Activated CD4-positive, alpha-beta memory T cell treated with anti-CD3 and anti-CD28 coated beads for 36 hours (primary cell): ENCODE measurements at regions of chr11 and their contacts with region 1.

Region 1: DNA sequence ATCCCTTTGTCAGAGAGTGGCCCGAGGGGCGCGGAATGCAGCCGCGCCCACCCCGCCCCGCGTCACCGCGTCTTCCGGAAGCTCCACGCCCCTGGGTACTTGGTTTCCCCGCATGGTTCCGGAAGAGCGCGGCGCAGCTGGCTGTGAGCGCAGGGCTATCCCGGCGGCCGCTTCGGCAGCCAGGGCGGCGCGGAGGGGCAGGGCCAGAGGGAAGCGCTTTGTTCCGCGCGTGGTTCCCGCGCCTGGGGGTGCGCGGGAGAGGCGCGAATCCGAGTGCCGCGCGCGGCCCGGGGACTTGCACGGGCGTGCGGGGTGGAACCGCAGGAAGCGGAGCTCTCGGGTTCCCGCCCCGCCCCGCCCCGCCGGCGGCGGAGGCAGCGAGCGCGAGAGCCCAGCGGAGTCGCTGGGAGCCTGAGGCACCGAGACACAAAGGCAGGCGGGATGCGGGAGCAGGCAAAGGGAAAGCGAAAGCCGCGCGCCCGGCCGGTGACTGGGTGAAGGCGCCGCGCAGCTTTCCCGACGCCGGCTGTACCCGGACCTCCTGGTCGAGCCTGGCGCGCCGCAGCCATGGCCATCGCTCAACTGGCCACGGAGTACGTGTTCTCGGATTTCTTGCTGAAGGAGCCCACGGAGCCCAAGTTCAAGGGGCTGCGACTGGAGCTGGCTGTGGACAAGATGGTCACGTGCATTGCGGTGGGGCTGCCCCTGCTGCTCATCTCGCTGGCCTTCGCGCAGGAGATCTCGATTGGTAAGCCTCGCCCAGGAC is at the start of gene PANX1:
- DNase-seq: peak; percentile 82
- H3K4me3 Mint-ChIP-seq: no peak within 1 kb of the TSS
- H3K27ac Mint-ChIP-seq: peak within 1 kb of the TSS; percentile 90
- H3K4me1 Mint-ChIP-seq: peaks cover 28% of the 10 kb centered on the region
- H3K27me3 Mint-ChIP-seq: no peaks in the 10 kb centered on the region
- total RNA-seq, gene PANX1: 11.4 to 11.7 TPM

Region 2: GRCh38 chr11:94017446-94017845 is 111.5 kb before region 1 on chr11:
- CTCF ChIA-PET with region 1: no interaction called
- POLR2A ChIA-PET with region 1: no interaction called
- intact Hi-C with region 1: no loop called
- DNase-seq: no peak
- H3K4me3 Mint-ChIP-seq: no peak overlapping the region
- H3K27ac Mint-ChIP-seq: no peak overlapping the region
- H3K4me1 Mint-ChIP-seq: no peaks in the 10 kb centered on the region
- H3K27me3 Mint-ChIP-seq: no peaks in the 10 kb centered on the region

Region 3: GRCh38 chr11:94066901-94067429 is 62.0 kb before region 1 on chr11:
- CTCF ChIA-PET with region 1: no interaction called
- POLR2A ChIA-PET with region 1: no interaction called
- intact Hi-C with region 1: no loop called
- DNase-seq: no peak
- H3K4me3 Mint-ChIP-seq: no peak overlapping the region
- H3K27ac Mint-ChIP-seq: no peak overlapping the region
- H3K4me1 Mint-ChIP-seq: no peaks in the 10 kb centered on the region
- H3K27me3 Mint-ChIP-seq: peaks cover 10% of the 10 kb centered on the region

Region 4: GRCh38 chr11:94117871-94118270 is 11.1 kb before region 1 on chr11:
- CTCF ChIA-PET with region 1: no interaction called
- POLR2A ChIA-PET with region 1: no interaction called
- intact Hi-C with region 1: no loop called
- DNase-seq: no peak
- H3K4me3 Mint-ChIP-seq: no peak overlapping the region
- H3K27ac Mint-ChIP-seq: no peak overlapping the region
- H3K4me1 Mint-ChIP-seq: no peaks in the 10 kb centered on the region
- H3K27me3 Mint-ChIP-seq: peaks cover 10% of the 10 kb centered on the region

Region 5: GRCh38 chr11:94151903-94152677 is 23.2 kb after region 1 on chr11:
- CTCF ChIA-PET with region 1: no interaction called
- POLR2A ChIA-PET with region 1: interaction called, 7 read pairs
- intact Hi-C with region 1: loop called (anchors 1 kb)
- DNase-seq: peak; percentile 50
- H3K4me3 Mint-ChIP-seq: no peak overlapping the region
- H3K27ac Mint-ChIP-seq: no peak overlapping the region
- H3K4me1 Mint-ChIP-seq: peaks cover 58% of the 10 kb centered on the region
- H3K27me3 Mint-ChIP-seq: no peaks in the 10 kb centered on the region

Region 6: DNA sequence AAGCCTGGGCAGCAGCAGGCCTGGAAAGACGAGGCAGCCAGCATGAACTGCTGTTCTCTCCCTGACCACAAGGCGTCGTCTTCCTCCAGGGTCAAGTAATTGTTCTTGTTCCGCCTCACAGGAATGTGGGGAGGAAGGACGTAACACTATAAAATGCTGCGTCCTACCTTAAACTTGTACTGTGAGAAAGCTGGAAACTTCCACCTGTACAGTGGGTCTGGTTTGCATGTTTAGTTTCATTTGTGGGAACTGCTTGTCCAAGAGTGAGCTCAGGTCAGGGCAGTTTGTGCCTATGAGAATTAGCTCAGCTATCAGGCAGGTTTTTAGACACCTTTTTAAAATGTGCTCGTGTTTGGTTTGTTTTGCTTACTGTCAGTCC is 54.9 kb after region 1 on chr11:
- CTCF ChIA-PET with region 1: interaction called, 5 read pairs
- POLR2A ChIA-PET with region 1: no interaction called
- intact Hi-C with region 1: loop called (anchors 5 kb)
- DNase-seq: peak; percentile 42
- H3K4me3 Mint-ChIP-seq: no peak overlapping the region
- H3K27ac Mint-ChIP-seq: no peak overlapping the region
- H3K4me1 Mint-ChIP-seq: no peaks in the 10 kb centered on the region
- H3K27me3 Mint-ChIP-seq: no peaks in the 10 kb centered on the region

Region 7: GRCh38 chr11:94243571-94244515 is 114.9 kb after region 1 on chr11:
- CTCF ChIA-PET with region 1: no interaction called
- POLR2A ChIA-PET with region 1: no interaction called
- intact Hi-C with region 1: no loop called
- DNase-seq: no peak
- H3K4me3 Mint-ChIP-seq: no peak overlapping the region
- H3K27ac Mint-ChIP-seq: no peak overlapping the region
- H3K4me1 Mint-ChIP-seq: no peaks in the 10 kb centered on the region
- H3K27me3 Mint-ChIP-seq: no peaks in the 10 kb centered on the region